Mammary epithelial cell (primary cell): ENCODE measurements at regions of chr20 and their contacts with region 1.

Region 1: DNA sequence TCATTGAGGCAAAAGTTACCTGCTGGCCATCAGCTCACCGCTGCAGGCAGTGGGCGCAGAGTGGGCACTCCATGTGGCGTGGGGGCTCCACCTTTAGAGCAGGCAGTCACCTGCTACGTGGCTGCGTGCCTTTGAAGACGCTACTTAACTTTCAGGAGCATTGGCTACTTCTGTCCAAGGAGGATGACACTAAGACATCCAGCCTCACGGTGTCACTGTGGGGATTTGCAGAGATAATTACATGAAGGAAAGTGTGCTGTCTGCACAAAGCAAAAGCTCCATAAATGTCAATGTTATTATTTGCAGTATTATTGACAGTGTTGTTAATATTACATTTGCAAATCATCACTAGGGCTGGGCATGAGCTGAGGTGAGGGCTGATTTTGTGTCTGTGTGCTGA is 166.0 kb upstream of the SYNDIG1 start:
- DNase-seq: no peak
- H3K4me3 ChIP-seq: no peak overlapping the region
- H3K27ac ChIP-seq: no peak overlapping the region
- H3K4me1 ChIP-seq: no peaks in the 10 kb centered on the region
- H3K27me3 ChIP-seq: no peaks in the 10 kb centered on the region
- CTCF ChIP-seq: peak in 1 of 2 donors; percentile 24

Region 2: DNA sequence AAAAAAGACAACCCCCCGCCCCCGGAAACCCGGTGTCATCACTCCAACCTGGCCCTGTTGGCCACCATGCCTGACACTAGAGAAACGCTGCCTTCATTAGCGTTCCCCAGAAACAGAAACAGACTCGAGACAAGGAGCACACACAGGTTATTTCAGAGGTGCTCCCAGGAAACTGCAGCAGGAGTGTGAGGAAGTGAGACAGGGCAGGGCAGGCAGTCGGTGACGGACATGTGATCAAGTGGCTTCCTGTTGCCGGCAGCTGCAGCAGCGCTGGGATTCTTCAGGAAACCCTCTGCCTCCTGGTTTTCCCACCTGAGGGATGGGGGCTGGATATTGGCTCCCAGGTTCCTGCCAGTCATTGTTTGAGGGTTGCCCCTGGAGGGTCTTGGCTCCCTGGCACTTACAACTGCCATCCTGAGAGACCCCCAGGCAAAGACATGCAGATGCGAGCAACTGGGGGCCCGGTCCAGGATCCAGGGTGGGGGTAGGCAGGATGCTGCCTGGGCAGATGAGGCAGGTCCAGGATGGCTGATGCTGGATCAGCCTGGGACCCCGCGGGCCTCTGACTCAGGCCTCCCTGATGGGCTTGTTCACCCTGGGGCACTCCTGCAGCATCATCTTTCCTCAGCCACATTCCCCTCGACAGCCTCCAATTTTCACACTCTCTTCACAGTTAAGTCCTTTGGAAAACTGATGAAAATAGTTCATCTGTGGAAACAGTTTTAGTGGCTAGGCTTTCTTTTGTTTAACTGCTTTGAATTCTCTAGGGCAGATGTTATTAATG is 15.4 kb after region 1 on chr20:
- CTCF ChIA-PET with region 1: no interaction called
- dilution Hi-C with region 1: no loop called
- in situ Hi-C with region 1: no loop called
- intact Hi-C with region 1: no loop called
- DNase-seq: no peak
- H3K4me3 ChIP-seq: no peak overlapping the region
- H3K27ac ChIP-seq: no peak overlapping the region
- H3K4me1 ChIP-seq: peaks cover 4% of the 10 kb centered on the region
- H3K27me3 ChIP-seq: no peaks in the 10 kb centered on the region
- CTCF ChIP-seq: no peak

Region 3: GRCh38 chr20:24584538-24585356 is 281.4 kb after region 1 on chr20:
- CTCF ChIA-PET with region 1: no interaction called
- dilution Hi-C with region 1: no loop called
- in situ Hi-C with region 1: loop called in 1 of 2 experiments (anchors 25 kb)
- intact Hi-C with region 1: no loop called
- DNase-seq: peak; percentile 52
- H3K4me3 ChIP-seq: no peak overlapping the region
- H3K27ac ChIP-seq: no peak overlapping the region
- H3K4me1 ChIP-seq: no peaks in the 10 kb centered on the region
- H3K27me3 ChIP-seq: no peaks in the 10 kb centered on the region
- CTCF ChIP-seq: no peak

Region 4: DNA sequence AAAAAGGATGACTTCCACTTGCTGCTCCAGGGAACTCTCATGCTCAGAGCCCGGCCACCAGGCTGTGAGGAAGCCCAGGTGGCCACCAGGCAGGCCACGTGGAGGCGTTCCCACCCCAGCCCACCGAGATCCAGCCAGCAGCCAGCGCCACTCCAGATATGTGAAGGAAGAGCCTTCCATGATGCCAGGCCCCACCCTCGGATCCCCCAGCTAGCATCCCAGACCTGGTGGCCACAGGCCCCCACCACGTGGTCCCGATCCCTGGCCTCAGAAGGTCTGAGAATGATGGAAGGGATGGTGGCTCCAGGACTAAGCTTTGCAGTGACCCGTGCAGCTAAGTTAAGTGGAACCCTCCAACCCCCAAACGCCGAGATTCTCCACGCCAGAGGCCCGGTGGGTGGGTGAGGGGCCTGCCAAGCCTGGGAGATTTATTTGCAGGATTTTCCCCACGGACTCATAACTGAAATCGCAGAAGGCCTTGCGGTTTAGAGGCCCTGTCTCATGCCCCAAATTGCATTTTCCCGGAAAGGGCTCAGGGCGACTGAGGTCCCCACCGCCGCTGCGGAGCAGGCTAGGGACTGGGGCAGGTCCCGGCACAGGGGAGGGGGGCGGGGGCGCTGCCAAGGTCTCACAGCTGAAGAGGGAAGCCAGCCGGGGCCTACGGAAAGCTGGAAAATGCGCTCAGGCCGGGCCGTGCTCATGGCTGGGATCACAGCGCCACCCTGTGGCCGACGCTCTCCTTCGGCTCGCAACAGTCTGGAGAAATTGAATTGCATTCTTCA is 614.6 kb after region 1 on chr20:
- CTCF ChIA-PET with region 1: no interaction called
- dilution Hi-C with region 1: no loop called
- in situ Hi-C with region 1: no loop called
- intact Hi-C with region 1: loop called (anchors 2 kb)
- DNase-seq: peak; percentile 33
- H3K4me3 ChIP-seq: no peak overlapping the region
- H3K27ac ChIP-seq: no peak overlapping the region
- H3K4me1 ChIP-seq: no peaks in the 10 kb centered on the region
- H3K27me3 ChIP-seq: no peaks in the 10 kb centered on the region
- CTCF ChIP-seq: peak; percentile 75 to 88

Region 5: GRCh38 chr20:25100914-25101313 is 797.5 kb after region 1 on chr20:
- CTCF ChIA-PET with region 1: no interaction called
- dilution Hi-C with region 1: no loop called
- in situ Hi-C with region 1: no loop called
- intact Hi-C with region 1: no loop called
- DNase-seq: no peak
- H3K4me3 ChIP-seq: no peak overlapping the region
- H3K27ac ChIP-seq: no peak overlapping the region
- H3K4me1 ChIP-seq: no peaks in the 10 kb centered on the region
- H3K27me3 ChIP-seq: peaks cover 2% of the 10 kb centered on the region
- CTCF ChIP-seq: no peak